Natural killer cell (primary cell): ENCODE measurements at regions of chr12 and their contacts with region 1.

Region 1: DNA sequence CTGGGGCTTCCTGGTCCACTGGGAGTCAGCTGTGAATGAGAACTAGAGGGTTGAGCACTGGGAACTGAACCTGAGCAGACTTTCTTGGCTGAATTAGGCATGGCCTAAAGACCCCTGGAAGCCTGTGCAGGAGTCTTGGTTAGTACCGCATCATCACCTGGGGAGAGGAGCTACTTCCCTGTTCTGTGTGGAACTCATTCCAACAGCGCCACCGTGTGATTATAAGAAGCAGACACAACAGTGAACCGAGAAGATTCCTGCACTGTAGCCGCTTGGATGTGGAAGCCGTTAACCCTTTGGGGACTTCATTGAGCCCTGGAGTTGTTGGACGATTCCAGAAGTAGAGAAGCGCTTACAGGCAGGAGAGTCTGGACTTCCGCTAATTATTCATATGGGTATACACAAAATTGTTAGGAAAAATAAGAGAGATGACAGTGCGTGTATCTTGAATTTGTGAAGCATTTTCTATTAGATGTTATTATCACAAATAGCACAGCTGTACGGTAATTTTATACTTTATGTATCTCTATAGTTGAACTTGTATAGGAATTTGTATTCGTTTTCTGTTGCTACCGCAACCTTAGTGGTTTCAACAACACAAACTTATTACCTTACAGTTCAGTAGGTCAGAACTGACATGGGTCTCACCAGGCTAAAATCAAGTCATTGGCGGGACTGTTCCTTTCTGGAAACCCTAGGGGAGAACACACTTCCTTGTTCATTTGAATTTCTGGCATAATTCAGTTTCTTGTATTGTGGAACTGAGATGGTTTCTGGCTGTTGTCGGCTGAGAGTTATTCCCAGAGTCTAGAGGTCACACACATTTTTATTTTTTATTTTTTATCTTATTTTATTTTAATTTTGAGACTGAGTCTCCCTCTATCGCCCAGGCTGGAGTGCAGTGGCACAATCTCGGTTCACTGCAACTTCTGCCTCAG is 100.7 kb downstream of the C2CD5 start:
- DNase-seq: peak; percentile 32 to 89
- ATAC-seq: peak; percentile 92 to 99 (median 99)
- H3K4me3 ChIP-seq: no peak overlapping the region
- H3K4me3 Mint-ChIP-seq: no peak overlapping the region
- H3K27ac ChIP-seq: no peak overlapping the region
- H3K27ac Mint-ChIP-seq: no peak overlapping the region
- H3K4me1 ChIP-seq: peaks cover 2% of the 10 kb centered on the region
- H3K4me1 Mint-ChIP-seq: no peaks in the 10 kb centered on the region
- H3K27me3 ChIP-seq: no peaks in the 10 kb centered on the region
- H3K27me3 Mint-ChIP-seq: no peaks in the 10 kb centered on the region
- CTCF ChIP-seq: peak; percentile 81

Region 2: DNA sequence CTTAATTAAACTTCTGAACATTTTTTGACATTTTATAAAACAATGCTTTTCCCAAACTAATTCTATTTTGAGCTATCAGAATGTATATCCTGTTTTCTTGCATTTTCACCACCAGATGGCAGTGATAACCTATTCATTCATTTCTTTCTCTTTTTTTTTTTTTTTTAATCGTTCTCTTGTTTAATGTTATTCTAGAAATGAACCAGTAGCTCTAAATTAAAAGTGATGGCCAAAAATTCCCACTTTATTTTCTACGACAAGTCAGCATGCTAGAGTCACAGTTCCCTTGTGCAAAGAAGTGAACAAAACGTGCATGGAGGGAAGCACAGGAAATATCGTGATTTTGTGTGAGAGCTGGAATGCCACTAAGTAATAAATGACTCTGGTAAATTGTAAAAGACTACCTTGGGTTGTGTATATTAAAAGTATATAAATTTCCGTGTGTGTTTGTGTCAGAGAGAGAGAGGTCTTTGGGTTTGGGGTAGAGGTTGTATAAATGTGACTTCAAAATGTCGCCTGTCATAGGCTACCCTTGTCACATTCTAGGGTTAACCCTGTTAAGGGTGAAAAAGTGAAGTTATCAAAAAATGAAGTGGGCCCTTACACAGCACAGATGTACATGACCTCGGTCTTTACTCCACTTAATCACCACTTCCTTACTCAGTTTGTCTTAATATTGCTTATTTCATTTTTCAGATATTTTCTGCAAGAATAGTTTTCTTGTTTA is 745.6 kb before region 1 on chr12:
- intact Hi-C with region 1: loop called (anchors 5 kb)
- DNase-seq: peak in 1 of 2 donors; percentile 69
- ATAC-seq: no peak
- H3K4me3 ChIP-seq: no peak overlapping the region
- H3K4me3 Mint-ChIP-seq: no peak overlapping the region
- H3K27ac ChIP-seq: no peak overlapping the region
- H3K27ac Mint-ChIP-seq: no peak overlapping the region
- H3K4me1 ChIP-seq: no peaks in the 10 kb centered on the region
- H3K4me1 Mint-ChIP-seq: peaks cover 4 to 5% of the 10 kb centered on the region in 2 donors
- H3K27me3 ChIP-seq: no peaks in the 10 kb centered on the region
- H3K27me3 Mint-ChIP-seq: peaks cover 0 to 7% of the 10 kb centered on the region in 2 donors
- CTCF ChIP-seq: peak; percentile 53

Region 3: GRCh38 chr12:22083167-22083566 is 360.5 kb before region 1 on chr12:
- intact Hi-C with region 1: loop called (anchors 1 kb)
- DNase-seq: peak in 1 of 2 donors; percentile 73
- ATAC-seq: peak in 2 of 3 donors; percentile 38
- H3K4me3 ChIP-seq: no peak overlapping the region
- H3K4me3 Mint-ChIP-seq: no peak overlapping the region
- H3K27ac ChIP-seq: no peak overlapping the region
- H3K27ac Mint-ChIP-seq: no peak overlapping the region
- H3K4me1 ChIP-seq: no peaks in the 10 kb centered on the region
- H3K4me1 Mint-ChIP-seq: no peaks in the 10 kb centered on the region
- H3K27me3 ChIP-seq: no peaks in the 10 kb centered on the region
- H3K27me3 Mint-ChIP-seq: peaks cover 1 to 22% of the 10 kb centered on the region in 2 donors
- CTCF ChIP-seq: peak; percentile 34

Region 4: GRCh38 chr12:22100958-22101748 is 342.5 kb before region 1 on chr12:
- intact Hi-C with region 1: loop called (anchors 1 kb)
- DNase-seq: peak in 1 of 2 donors; percentile 75
- ATAC-seq: peak; percentile 71 to 87 (median 77)
- H3K4me3 ChIP-seq: no peak overlapping the region
- H3K4me3 Mint-ChIP-seq: no peak overlapping the region
- H3K27ac ChIP-seq: no peak overlapping the region
- H3K27ac Mint-ChIP-seq: no peak overlapping the region
- H3K4me1 ChIP-seq: peaks cover 10% of the 10 kb centered on the region
- H3K4me1 Mint-ChIP-seq: peaks cover 0 to 10% of the 10 kb centered on the region in 2 donors
- H3K27me3 ChIP-seq: no peaks in the 10 kb centered on the region
- H3K27me3 Mint-ChIP-seq: peaks cover 6 to 19% of the 10 kb centered on the region in 2 donors
- CTCF ChIP-seq: peak; percentile 19

Region 5: GRCh38 chr12:22130671-22131070 is 313.0 kb before region 1 on chr12:
- intact Hi-C with region 1: no loop called
- DNase-seq: no peak
- ATAC-seq: no peak
- H3K4me3 ChIP-seq: no peak overlapping the region
- H3K4me3 Mint-ChIP-seq: no peak overlapping the region
- H3K27ac ChIP-seq: no peak overlapping the region
- H3K27ac Mint-ChIP-seq: no peak overlapping the region
- H3K4me1 ChIP-seq: no peaks in the 10 kb centered on the region
- H3K4me1 Mint-ChIP-seq: no peaks in the 10 kb centered on the region
- H3K27me3 ChIP-seq: no peaks in the 10 kb centered on the region
- H3K27me3 Mint-ChIP-seq: peaks cover 11 to 33% of the 10 kb centered on the region in 2 donors
- CTCF ChIP-seq: no peak

Region 6: DNA sequence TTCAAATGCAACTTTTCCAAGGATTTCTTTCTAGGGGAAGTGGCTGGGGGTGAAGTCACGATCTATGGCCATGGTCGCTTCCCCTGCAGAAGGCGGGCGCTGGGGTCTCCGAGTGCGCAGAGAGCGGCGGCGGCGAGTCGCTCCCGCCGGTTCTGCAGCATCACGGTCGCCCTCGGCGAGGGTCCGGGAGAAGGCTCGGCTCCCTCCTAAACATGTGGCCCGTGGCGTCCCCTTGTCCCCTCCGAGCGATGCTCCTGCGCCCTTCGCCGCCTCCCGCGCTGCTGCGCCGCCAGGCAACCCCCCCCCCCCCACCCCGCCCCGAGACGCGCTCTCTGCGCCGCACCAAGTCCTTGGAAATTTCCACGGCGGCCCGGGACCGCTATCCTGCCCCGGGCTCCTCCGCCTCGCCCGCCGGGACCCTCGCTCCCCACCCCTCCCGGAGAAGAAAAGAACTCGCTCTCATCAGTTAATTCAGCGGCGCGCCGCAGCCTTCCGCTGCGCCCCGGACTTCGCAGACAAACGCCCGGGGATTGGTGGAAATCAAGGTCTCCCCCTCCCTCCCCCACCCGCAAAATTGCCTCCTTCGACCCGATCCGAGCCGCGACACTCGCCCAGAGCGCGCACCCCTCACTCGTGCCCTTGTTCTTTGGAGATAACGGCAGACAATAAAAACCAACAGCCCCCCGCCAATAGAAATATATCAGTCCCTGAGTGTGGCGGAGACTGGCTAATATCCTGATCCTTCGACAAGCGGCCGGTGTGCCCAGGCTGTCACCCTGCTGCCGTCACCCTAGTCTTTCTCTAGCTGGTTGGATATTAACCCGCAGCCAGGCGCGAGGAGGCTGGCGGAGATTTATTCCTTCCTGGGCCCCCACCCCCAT is 109.0 kb before region 1 on chr12 and contains the start of gene ST8SIA1:
- intact Hi-C with region 1: loop called (anchors 10 kb)
- DNase-seq: peak in 1 of 2 donors; percentile 83
- ATAC-seq: peak; percentile 44 to 48 (median 45)
- H3K4me3 ChIP-seq: peak within 1 kb of the TSS; percentile 51
- H3K4me3 Mint-ChIP-seq: peak within 1 kb of the TSS; percentile 94
- H3K27ac ChIP-seq: peak within 1 kb of the TSS; percentile 15
- H3K27ac Mint-ChIP-seq: peak within 1 kb of the TSS; percentile 76 to 78
- H3K4me1 ChIP-seq: peaks cover 24% of the 10 kb centered on the region
- H3K4me1 Mint-ChIP-seq: peaks cover 18 to 21% of the 10 kb centered on the region in 2 donors
- H3K27me3 ChIP-seq: peaks cover 9% of the 10 kb centered on the region
- H3K27me3 Mint-ChIP-seq: peaks cover 61 to 62% of the 10 kb centered on the region in 2 donors
- CTCF ChIP-seq: no peak
- total RNA-seq, gene ST8SIA1: 0.60 to 0.79 TPM in 2 of 3 donors, not detected in the other

Region 7: DNA sequence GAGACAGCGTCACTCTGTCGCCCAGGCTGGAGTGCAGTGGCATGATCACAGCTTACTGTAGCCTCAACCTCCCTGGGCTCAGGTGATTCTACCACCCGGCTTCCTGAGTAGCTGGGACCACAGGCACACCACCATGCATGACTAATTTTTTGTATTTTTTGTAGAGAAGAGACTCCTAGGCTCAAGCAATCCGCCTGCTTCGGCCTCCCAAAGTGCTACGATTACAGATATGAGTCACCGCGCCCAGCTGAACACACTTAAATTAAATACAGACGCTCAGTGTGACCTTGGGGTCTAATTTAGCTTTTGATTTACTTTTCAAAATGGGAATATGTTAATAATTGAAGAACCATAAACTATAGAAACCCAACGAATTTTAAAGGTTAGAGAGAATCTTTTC is 23.5 kb after region 1 on chr12:
- intact Hi-C with region 1: no loop called
- DNase-seq: no peak
- ATAC-seq: no peak
- H3K4me3 ChIP-seq: no peak overlapping the region
- H3K4me3 Mint-ChIP-seq: no peak overlapping the region
- H3K27ac ChIP-seq: no peak overlapping the region
- H3K27ac Mint-ChIP-seq: no peak overlapping the region
- H3K4me1 ChIP-seq: no peaks in the 10 kb centered on the region
- H3K4me1 Mint-ChIP-seq: peaks cover 0 to 5% of the 10 kb centered on the region in 2 donors
- H3K27me3 ChIP-seq: no peaks in the 10 kb centered on the region
- H3K27me3 Mint-ChIP-seq: no peaks in the 10 kb centered on the region
- CTCF ChIP-seq: no peak